Aorta (tissue), 5 donors: ENCODE measurements at regions of chr3 and their contacts with region 1.

Region 1: GRCh38 chr3:5974630-5975322 is 787.3 kb downstream of the EDEM1 start:
- DNase-seq: no peak
- ATAC-seq: no peak
- H3K4me3 ChIP-seq: no peak overlapping the region
- H3K27ac ChIP-seq: no peak overlapping the region
- H3K4me1 ChIP-seq: no peaks in the 10 kb centered on the region
- H3K27me3 ChIP-seq: no peaks in the 10 kb centered on the region

Region 2: DNA sequence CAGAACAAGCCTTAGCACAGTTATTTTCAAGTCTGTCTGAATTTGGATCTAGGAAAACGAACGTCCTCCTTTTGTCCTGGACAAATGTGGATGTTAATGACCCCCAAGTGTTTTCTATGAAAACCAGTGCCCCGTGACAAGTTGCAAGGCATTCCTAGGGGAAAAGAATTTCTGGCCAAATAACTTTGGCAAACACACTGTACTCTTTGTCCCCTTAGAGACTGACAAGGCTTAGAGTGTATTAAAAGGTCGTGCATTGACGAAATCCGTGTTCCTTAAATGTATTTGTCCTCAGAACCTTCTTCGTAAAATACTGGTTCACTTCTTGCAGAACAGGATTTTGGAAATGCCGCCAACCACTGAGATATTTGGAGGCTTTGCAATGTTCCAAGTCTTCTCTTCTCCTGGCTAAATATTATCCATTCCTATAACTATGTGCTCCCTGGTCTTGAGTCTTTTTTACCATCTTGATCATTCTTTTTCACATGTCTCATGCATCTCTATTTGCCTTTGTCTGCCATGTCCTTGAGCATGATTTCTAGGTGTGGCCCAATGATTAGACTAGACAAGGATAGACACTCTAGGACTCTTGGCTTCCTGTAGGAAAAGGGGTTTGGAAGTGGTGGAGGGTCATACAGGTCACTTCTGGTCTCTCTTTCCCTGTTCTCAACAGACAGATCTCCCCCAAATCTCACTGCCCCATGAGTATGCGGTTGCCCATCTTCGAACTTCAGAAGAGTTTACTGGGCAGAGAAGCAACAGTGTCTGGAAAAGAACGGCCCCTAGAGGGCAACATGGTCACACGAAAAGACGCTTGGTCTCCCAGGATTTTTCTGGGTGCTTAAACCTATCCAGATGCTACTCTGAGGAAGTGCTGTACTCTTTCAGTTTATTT is 669.7 kb before region 1 on chr3:
- intact Hi-C with region 1: loop called in 1 of 2 experiments (anchors 5 kb)
- DNase-seq: no peak
- ATAC-seq: no peak
- H3K4me3 ChIP-seq: no peak overlapping the region
- H3K27ac ChIP-seq: no peak overlapping the region
- H3K4me1 ChIP-seq: no peaks in the 10 kb centered on the region
- H3K27me3 ChIP-seq: peaks cover 0 to 2% of the 10 kb centered on the region in 2 donors

Region 3: DNA sequence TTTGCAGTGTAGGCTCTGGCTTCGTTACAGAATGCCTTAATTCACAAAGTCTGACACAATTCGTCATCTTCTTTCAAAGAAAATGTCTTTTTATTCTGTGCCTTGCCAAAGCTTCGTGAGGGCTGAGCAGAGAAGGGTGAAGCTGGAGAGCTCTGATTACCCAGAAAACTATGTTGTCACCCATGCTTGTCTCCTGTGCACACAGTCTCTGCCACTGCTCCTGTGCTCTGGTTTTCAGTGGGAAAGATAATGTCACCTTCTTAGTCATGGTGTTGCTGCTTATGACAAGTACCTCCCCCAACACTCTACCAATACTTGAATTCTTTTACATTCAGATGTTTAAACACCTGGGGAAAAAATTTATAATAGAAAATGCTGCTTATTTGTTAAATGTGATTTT is 377.0 kb after region 1 on chr3:
- intact Hi-C with region 1: no loop called
- DNase-seq: no peak
- ATAC-seq: no peak
- H3K4me3 ChIP-seq: no peak overlapping the region
- H3K27ac ChIP-seq: no peak overlapping the region
- H3K4me1 ChIP-seq: no peaks in the 10 kb centered on the region
- H3K27me3 ChIP-seq: no peaks in the 10 kb centered on the region